Activated B cell treated with CpG ODN at 0.5 μM for 24 hours (primary cell): ENCODE measurements at regions of chr20 and their contacts with region 1.

Region 1: GRCh38 chr20:48359697-48360336 is 468.0 kb downstream of the PREX1 start:
- DNase-seq: peak; percentile 73
- ATAC-seq: peak; percentile 81
- H3K4me3 Mint-ChIP-seq: peak overlapping the region; percentile 88
- H3K27ac Mint-ChIP-seq: peak overlapping the region; percentile 97
- H3K4me1 Mint-ChIP-seq: peaks cover 59% of the 10 kb centered on the region
- H3K27me3 Mint-ChIP-seq: no peaks in the 10 kb centered on the region
- CTCF ChIP-seq: no peak

Region 2: GRCh38 chr20:48047444-48047843 is 312.4 kb before region 1 on chr20:
- CTCF ChIA-PET with region 1: no interaction called
- POLR2A ChIA-PET with region 1: no interaction called
- intact Hi-C with region 1: no loop called
- DNase-seq: no peak
- ATAC-seq: no peak
- H3K4me3 Mint-ChIP-seq: no peak overlapping the region
- H3K27ac Mint-ChIP-seq: no peak overlapping the region
- H3K4me1 Mint-ChIP-seq: no peaks in the 10 kb centered on the region
- H3K27me3 Mint-ChIP-seq: peaks cover 5% of the 10 kb centered on the region
- CTCF ChIP-seq: no peak

Region 3: DNA sequence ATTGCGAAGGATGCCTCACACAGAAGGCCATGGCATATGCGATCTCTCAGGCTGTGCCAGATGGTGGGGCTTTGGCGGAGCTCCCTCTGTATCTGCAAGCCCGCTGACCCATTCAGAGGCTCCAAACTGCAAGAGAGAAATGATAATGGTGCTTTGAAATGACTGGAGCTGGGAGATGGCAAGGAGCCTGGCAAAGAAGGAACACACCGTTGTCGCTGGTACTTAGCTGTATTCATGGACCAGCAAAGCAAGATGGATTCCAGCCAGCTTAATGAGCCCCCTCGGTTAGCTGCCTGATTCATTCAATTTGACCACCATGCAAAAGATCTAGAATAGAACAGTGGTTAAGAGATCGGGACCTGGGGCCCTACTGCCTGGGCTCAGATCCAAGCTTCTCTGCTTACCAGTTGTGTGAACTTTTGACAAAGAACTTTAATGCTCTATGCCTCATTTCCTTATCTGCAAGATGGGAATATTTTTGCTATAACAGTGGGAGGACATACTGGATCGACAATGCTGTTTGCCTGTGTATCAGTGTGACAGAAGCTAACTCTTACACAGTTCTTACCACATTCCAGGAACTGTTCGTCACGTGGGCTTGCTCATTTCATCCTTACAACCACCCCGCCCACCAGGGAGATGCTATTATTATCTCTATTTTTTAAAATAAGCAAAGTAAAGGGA is 256.8 kb before region 1 on chr20:
- CTCF ChIA-PET with region 1: no interaction called
- POLR2A ChIA-PET with region 1: no interaction called
- intact Hi-C with region 1: no loop called
- DNase-seq: no peak
- ATAC-seq: no peak
- H3K4me3 Mint-ChIP-seq: no peak overlapping the region
- H3K27ac Mint-ChIP-seq: no peak overlapping the region
- H3K4me1 Mint-ChIP-seq: no peaks in the 10 kb centered on the region
- H3K27me3 Mint-ChIP-seq: no peaks in the 10 kb centered on the region
- CTCF ChIP-seq: no peak

Region 4: DNA sequence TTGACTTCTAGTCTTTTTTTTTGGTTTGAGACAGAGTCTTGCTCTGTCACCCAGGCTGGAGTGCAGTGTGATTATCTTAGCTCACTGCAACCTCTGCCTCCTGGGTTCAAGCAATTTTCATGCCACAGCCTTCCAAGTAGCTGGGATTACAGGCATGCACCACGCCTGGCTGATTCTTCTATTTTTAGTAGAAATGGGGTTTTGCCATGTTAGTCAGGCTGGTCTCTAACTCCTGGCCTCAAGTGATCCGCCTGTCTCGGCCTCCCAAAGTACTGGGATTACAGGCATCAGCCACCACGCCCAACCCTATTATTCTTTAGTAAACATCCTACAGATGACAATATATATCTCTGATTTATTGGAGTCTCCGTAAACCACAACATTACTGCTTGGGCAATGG is 38.5 kb before region 1 on chr20:
- CTCF ChIA-PET with region 1: no interaction called
- POLR2A ChIA-PET with region 1: no interaction called
- intact Hi-C with region 1: no loop called
- DNase-seq: no peak
- ATAC-seq: no peak
- H3K4me3 Mint-ChIP-seq: no peak overlapping the region
- H3K27ac Mint-ChIP-seq: no peak overlapping the region
- H3K4me1 Mint-ChIP-seq: no peaks in the 10 kb centered on the region
- H3K27me3 Mint-ChIP-seq: peaks cover 16% of the 10 kb centered on the region
- CTCF ChIP-seq: no peak

Region 5: GRCh38 chr20:48339190-48340062 is 20.4 kb before region 1 on chr20:
- CTCF ChIA-PET with region 1: interaction called, 3 read pairs
- POLR2A ChIA-PET with region 1: interaction called, 5 read pairs
- intact Hi-C with region 1: loop called (anchors 2 kb)
- DNase-seq: no peak
- ATAC-seq: peak; percentile 38
- H3K4me3 Mint-ChIP-seq: no peak overlapping the region
- H3K27ac Mint-ChIP-seq: peak overlapping the region; percentile 21
- H3K4me1 Mint-ChIP-seq: peaks cover 31% of the 10 kb centered on the region
- H3K27me3 Mint-ChIP-seq: peaks cover 20% of the 10 kb centered on the region
- CTCF ChIP-seq: no peak

Region 6: GRCh38 chr20:48421163-48421946 is 61.5 kb after region 1 on chr20:
- CTCF ChIA-PET with region 1: no interaction called
- POLR2A ChIA-PET with region 1: no interaction called
- intact Hi-C with region 1: loop called (anchors 5 kb)
- DNase-seq: no peak
- ATAC-seq: no peak
- H3K4me3 Mint-ChIP-seq: no peak overlapping the region
- H3K27ac Mint-ChIP-seq: no peak overlapping the region
- H3K4me1 Mint-ChIP-seq: peaks cover 22% of the 10 kb centered on the region
- H3K27me3 Mint-ChIP-seq: peaks cover 12% of the 10 kb centered on the region
- CTCF ChIP-seq: no peak

Region 7: DNA sequence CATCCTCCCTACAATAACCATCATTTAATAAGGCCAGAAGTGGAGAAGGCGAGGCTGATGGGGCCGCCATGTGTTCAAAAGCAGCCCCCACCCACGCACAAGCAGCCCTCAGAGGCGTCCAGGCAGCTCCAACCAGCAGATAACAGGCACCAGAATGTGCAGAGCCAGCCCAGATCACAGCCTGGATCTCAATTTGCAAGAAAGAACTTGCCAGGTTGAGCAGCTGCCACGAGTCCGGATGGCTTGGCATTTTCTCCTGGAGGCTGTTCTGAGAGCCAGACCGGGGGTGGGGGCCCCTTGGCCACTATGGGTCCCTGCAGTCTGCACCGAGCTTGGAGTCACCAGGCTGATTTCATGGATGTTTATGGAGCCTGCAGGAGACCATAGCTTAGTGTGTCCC is 129.8 kb after region 1 on chr20:
- CTCF ChIA-PET with region 1: no interaction called
- POLR2A ChIA-PET with region 1: no interaction called
- intact Hi-C with region 1: loop called (anchors 1 kb)
- DNase-seq: no peak
- ATAC-seq: no peak
- H3K4me3 Mint-ChIP-seq: no peak overlapping the region
- H3K27ac Mint-ChIP-seq: peak overlapping the region; percentile 43
- H3K4me1 Mint-ChIP-seq: peaks cover 30% of the 10 kb centered on the region
- H3K27me3 Mint-ChIP-seq: peaks cover 14% of the 10 kb centered on the region
- CTCF ChIP-seq: no peak

Region 8: GRCh38 chr20:48921151-48921898 is 561.5 kb after region 1 on chr20 and contains the start of gene ARFGEF2:
- CTCF ChIA-PET with region 1: no interaction called
- POLR2A ChIA-PET with region 1: no interaction called
- intact Hi-C with region 1: loop called (anchors 10 kb)
- DNase-seq: peak; percentile 96
- ATAC-seq: peak; percentile 90
- H3K4me3 Mint-ChIP-seq: peak within 1 kb of the TSS; percentile 93
- H3K27ac Mint-ChIP-seq: peak within 1 kb of the TSS; percentile 95
- H3K4me1 Mint-ChIP-seq: peaks cover 58% of the 10 kb centered on the region
- H3K27me3 Mint-ChIP-seq: no peaks in the 10 kb centered on the region
- CTCF ChIP-seq: no peak
- total RNA-seq, gene ARFGEF2: 30.8 and 39.0 TPM in 2 replicates